Calu3 (cell line): ENCODE measurements at regions of chr16 and their contacts with region 1.

Region 1: DNA sequence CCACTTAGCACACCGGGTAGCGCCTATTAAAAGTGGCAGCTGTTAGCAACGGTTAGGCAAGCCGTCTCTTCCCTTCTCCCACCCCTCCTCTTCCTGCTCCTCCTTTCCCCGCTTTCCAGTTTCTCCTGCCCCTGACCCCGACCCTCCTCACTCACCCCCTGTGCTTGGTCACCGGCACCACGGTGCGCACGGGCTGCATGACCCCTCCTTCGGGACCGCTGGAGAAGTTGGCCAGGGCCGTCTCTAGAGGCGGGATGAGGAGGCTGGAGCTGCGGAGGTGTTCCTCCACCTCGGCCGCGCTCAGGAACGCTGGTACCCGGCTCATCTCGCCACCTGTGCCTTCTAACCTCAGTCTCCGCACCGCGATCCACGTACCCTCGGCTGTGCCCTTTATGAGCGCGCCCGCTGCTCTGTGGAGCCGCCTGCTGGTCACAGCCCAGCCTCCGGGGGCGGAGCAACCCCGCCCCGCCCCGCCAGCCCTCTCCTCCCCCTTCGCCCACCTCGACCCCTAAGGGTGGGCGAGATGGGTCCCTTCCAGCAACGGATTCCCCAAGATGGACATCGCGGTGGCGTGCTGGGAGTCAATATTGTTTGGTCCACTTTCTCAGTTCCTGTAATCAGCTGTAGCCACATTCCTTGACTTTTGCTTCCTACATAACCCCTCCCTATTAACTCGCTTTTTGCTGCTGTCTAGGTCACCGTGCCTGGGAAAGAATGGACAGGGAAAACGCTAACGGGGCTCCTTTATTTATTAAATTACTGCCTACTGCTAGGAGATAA is at the start of gene CRYM:
- DNase-seq: peak; percentile 83
- H3K4me3 Mint-ChIP-seq: peak within 1 kb of the TSS; percentile 85
- H3K27ac Mint-ChIP-seq: peak within 1 kb of the TSS; percentile 19
- H3K4me1 Mint-ChIP-seq: peaks cover 7% of the 10 kb centered on the region
- H3K27me3 Mint-ChIP-seq: peaks cover 29% of the 10 kb centered on the region
- CTCF ChIP-seq: peak; percentile 96
- total RNA-seq, gene CRYM: 4.1 and 7.2 TPM in 2 replicates

Region 2: GRCh38 chr16:21184834-21185233 is 93.3 kb before region 1 on chr16:
- CTCF ChIA-PET with region 1: interaction called, 24 read pairs
- intact Hi-C with region 1: loop called (anchors 1 kb)
- DNase-seq: no peak
- H3K4me3 Mint-ChIP-seq: no peak overlapping the region
- H3K27ac Mint-ChIP-seq: no peak overlapping the region
- H3K4me1 Mint-ChIP-seq: peaks cover 8% of the 10 kb centered on the region
- H3K27me3 Mint-ChIP-seq: no peaks in the 10 kb centered on the region
- CTCF ChIP-seq: no peak

Region 3: DNA sequence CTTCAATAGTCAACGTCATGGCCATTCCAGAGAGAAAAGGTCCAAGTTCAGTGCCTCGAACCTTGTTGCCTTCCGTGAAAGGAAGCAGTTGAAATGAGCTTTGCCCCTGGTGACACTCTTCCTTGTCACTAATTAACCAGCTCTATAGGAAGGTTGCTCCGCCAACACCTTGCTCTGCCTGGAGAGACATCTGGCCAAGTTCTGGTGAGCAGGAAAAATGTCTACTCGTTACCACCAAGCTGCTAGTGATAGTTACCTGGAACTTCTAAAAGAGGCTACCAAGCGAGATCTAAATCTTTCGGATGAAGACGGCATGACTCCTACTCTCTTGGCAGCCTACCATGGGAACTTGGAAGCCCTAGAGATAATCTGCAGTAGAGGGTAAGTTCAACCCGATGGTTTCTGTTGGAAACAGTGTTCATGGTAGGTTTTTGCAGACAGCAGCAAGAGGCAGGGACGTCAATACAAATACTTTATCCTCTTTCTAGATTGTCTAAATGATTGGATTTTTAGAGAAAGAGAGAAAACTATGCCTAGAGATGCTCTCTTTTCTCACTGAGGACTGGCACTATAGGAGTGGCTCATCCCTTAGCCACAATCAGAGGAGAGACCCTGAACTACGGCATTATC is 44.5 kb before region 1 on chr16 and contains the start of gene ANKS4B:
- CTCF ChIA-PET with region 1: no interaction called
- intact Hi-C with region 1: loop called (anchors 5 kb)
- DNase-seq: peak; percentile 38
- H3K4me3 Mint-ChIP-seq: peak within 1 kb of the TSS; percentile 78
- H3K27ac Mint-ChIP-seq: peak within 1 kb of the TSS; percentile 45
- H3K4me1 Mint-ChIP-seq: peaks cover 29% of the 10 kb centered on the region
- H3K27me3 Mint-ChIP-seq: no peaks in the 10 kb centered on the region
- CTCF ChIP-seq: no peak
- total RNA-seq, gene ANKS4B: 3.2 and 5.5 TPM in 2 replicates

Region 4: DNA sequence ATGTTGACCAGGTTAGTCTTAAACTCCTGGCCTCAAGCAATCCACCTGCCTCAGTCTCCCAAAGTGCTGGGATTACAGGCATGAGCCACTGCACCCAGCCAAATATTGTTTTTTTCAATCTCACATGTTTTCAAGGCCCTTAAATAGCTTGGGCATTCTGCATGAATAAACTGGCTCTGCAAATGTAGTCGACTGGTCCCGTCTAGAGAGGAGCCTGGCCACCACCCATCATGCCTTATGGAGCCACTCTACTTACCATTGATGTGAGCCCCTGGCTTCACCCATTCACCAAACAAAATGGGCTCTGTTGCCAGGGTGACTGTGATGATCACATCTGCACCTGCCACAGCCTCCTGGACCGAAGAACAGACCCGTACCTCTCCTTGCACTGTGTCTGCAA is 10.8 kb before region 1 on chr16:
- CTCF ChIA-PET with region 1: no interaction called
- intact Hi-C with region 1: no loop called
- DNase-seq: no peak
- H3K4me3 Mint-ChIP-seq: no peak overlapping the region
- H3K27ac Mint-ChIP-seq: no peak overlapping the region
- H3K4me1 Mint-ChIP-seq: peaks cover 49% of the 10 kb centered on the region
- H3K27me3 Mint-ChIP-seq: no peaks in the 10 kb centered on the region
- CTCF ChIP-seq: no peak